Caco-2 (cell line): ENCODE measurements at regions of chr12 and their contacts with region 1.

Region 1: DNA sequence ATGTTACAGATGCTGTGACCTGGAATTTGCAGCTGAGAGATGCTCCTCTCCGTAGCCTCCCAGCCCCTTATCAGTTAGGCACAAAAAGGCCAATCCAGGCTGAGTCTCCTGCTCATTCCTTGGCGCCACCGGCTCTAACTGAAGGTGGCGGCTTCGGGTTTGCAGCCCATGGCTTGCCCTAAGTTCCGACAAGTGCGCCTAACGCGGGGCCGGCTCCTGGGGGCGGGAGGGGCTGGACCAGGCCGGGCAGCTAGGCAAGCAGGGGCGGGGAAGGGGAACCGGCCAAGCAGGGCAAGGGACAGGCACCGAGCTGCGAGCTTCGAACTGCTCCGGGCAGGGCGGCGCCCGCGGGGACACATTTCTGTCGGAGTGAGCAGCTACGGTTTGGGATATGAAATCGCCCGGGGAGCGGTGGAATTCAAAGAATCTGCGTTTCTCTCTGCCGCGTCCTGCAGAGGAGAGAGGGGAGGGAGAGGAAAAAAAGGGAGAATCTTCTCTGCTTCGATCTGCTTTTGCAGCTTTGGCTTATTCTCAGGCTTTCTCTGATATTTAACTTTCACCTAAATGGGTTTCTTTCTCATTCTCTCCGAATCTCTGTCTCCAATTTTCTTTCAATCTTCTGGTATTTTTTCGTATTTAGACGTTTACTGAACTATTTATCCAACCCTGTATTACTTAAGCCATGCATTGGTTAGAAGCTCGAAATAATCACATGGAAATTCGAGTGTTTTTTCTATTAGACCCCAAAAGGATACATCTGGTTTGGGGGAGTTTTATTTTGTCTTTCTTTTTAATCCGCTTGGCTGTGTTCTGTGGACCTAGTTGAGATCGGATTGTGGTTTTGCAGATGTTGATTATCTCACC is 1.6 kb upstream of the HOXC12 start:
- DNase-seq: peak; percentile 87 to 88
- H3K4me3 ChIP-seq: peak overlapping the region; percentile 5; the same call in 1 of the 2 replicates
- H3K4me3 Mint-ChIP-seq: peak overlapping the region; percentile 71
- H3K27ac Mint-ChIP-seq: peak overlapping the region; percentile 76
- H3K4me1 ChIP-seq: peaks cover 31% of the 10 kb centered on the region
- H3K4me1 Mint-ChIP-seq: peaks cover 21% of the 10 kb centered on the region
- H3K27me3 ChIP-seq: no peaks in the 10 kb centered on the region
- H3K27me3 Mint-ChIP-seq: no peaks in the 10 kb centered on the region
- CTCF ChIP-seq: no peak

Region 2: DNA sequence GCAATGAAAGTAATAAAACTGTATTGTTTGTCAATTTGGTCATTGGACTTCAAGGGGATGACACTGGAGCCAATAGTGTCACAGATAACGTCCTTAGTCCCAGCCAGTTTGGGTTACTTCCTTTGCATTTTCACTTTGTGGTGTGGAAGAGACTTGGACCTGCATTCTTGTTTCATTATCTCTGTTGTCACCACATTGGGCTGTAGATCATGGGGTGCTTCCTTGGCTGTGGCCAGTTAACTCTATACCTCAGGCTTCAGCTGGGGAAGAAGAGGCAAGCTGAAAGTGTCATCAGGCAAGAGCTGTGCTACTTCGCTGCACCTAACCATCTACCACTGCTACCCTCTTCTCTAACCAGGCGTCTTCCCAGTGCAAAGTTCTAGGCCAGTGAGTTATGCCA is 186.2 kb before region 1 on chr12:
- CTCF ChIA-PET with region 1: no interaction called
- POLR2A ChIA-PET with region 1: no interaction called
- intact Hi-C with region 1: loop called (anchors 1 kb)
- DNase-seq: no peak
- H3K4me3 ChIP-seq: no peak overlapping the region
- H3K4me3 Mint-ChIP-seq: no peak overlapping the region
- H3K27ac Mint-ChIP-seq: no peak overlapping the region
- H3K4me1 ChIP-seq: no peaks in the 10 kb centered on the region
- H3K4me1 Mint-ChIP-seq: no peaks in the 10 kb centered on the region
- H3K27me3 ChIP-seq: peaks cover 1% of the 10 kb centered on the region
- H3K27me3 Mint-ChIP-seq: peaks cover 21% of the 10 kb centered on the region
- CTCF ChIP-seq: no peak

Region 3: GRCh38 chr12:53806721-53807120 is 146.4 kb before region 1 on chr12:
- CTCF ChIA-PET with region 1: no interaction called
- POLR2A ChIA-PET with region 1: no interaction called
- intact Hi-C with region 1: loop called (anchors 5 kb)
- DNase-seq: no peak
- H3K4me3 ChIP-seq: no peak overlapping the region
- H3K4me3 Mint-ChIP-seq: no peak overlapping the region
- H3K27ac Mint-ChIP-seq: no peak overlapping the region
- H3K4me1 ChIP-seq: peaks cover 12% of the 10 kb centered on the region
- H3K4me1 Mint-ChIP-seq: peaks cover 20% of the 10 kb centered on the region
- H3K27me3 ChIP-seq: no peaks in the 10 kb centered on the region
- H3K27me3 Mint-ChIP-seq: no peaks in the 10 kb centered on the region
- CTCF ChIP-seq: no peak

Region 4: DNA sequence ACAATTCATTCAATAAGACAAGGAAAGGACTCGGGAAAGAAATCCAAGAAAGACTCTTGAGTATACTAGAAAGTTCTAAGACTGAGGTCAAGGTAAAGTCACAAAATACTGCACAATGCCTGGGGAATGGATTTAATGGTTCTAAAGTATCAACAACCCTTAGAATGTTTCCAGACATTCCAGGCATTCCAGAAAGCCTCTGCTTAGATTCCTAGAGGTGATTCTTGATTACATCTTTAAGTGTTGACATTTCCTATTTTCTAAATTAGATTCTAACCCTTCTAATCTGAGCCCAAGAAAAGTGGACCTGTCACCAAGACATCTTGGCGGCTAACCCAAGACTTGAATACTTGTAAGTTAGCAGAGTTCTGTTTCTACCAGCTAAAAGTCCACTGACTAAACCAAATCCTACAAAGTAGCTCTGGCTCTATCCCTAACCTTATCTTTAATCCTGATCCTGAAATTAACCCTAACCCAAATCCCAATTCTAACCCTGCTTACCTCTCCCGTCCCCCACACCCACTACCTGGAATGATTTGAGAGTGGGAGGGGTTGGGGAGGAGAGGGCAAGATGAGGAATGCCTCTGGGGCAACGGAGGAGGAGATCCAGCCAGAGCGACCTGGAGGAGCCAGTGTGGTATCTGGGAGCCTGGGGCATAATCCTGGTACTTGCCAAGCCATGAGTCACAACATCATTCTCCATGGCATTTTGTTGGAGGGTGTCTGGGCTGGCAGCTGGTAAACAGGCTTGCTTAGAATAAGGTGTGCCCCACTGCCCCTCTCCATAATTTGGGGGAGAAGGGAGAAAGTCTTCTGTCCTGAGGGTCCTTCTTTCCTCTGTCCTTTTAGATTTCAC is 107.9 kb before region 1 on chr12:
- CTCF ChIA-PET with region 1: no interaction called
- POLR2A ChIA-PET with region 1: no interaction called
- intact Hi-C with region 1: no loop called
- DNase-seq: peak; percentile 7 to 67
- H3K4me3 ChIP-seq: no peak overlapping the region
- H3K4me3 Mint-ChIP-seq: no peak overlapping the region
- H3K27ac Mint-ChIP-seq: no peak overlapping the region
- H3K4me1 ChIP-seq: peaks cover 19% of the 10 kb centered on the region
- H3K4me1 Mint-ChIP-seq: peaks cover 7% of the 10 kb centered on the region
- H3K27me3 ChIP-seq: no peaks in the 10 kb centered on the region
- H3K27me3 Mint-ChIP-seq: peaks cover 3% of the 10 kb centered on the region
- CTCF ChIP-seq: no peak

Region 5: DNA sequence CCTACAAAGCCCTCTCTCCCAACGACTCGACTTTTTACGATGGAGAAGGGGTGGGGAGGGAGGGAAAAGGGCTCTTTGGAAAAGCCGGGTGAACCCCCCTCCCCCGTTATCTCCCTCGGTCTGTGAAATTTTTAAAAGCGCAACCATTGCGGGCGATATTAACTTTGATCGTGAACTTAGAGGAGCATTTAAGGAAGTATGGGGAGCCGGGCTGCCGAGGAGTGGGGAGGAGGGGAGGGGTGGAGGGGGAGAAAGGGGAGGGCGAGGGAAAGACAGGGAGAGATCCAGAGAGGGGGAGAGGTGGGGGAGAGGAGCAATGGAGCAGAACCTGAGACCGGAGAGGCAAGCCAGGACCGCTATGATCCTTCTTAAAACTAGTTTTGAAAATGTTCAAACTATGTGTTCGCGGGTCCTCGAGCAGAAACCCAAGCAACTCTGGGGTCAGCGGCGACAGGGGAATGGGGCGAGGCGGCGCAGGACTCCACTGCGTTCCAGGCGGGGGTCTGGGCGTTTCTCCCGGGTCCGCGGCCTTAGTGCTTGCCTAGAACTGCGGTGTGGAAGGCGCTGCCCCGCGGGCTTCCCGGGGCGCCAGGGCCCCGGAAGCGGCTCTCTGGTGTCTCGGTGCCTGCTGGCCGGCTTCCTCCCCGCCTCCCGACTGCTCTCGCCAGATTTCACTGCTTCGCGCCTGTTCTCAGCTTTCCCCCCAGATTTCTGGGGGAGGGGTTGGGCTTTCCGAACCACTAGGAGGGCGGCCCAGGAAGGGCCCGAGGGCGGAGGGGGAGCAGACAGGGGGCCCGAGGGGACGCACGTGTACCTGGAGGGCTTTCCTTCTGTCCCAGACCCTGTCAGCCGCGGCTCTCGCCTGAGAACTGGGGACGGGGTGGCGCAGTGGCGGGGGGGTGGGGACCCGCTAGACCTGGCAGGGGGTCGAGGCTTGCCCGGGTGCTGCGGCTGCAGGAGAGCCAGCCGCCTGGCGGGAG is 21.3 kb after region 1 on chr12 and contains the start of gene HOTAIR:
- CTCF ChIA-PET with region 1: interaction called, 8 read pairs
- POLR2A ChIA-PET with region 1: interaction called, 10 read pairs
- intact Hi-C with region 1: loop called (anchors 2 kb)
- DNase-seq: peak in 1 of 2 experiments; percentile 59
- H3K4me3 ChIP-seq: peak within 1 kb of the TSS; percentile 66
- H3K4me3 Mint-ChIP-seq: peak within 1 kb of the TSS; percentile 83
- H3K27ac Mint-ChIP-seq: peak within 1 kb of the TSS; percentile 73
- H3K4me1 ChIP-seq: peaks cover 20% of the 10 kb centered on the region
- H3K4me1 Mint-ChIP-seq: peaks cover 8% of the 10 kb centered on the region
- H3K27me3 ChIP-seq: no peaks in the 10 kb centered on the region
- H3K27me3 Mint-ChIP-seq: no peaks in the 10 kb centered on the region
- CTCF ChIP-seq: no peak
- total RNA-seq, gene HOTAIR: 1.6 and 1.9 TPM in 2 replicates

Region 6: DNA sequence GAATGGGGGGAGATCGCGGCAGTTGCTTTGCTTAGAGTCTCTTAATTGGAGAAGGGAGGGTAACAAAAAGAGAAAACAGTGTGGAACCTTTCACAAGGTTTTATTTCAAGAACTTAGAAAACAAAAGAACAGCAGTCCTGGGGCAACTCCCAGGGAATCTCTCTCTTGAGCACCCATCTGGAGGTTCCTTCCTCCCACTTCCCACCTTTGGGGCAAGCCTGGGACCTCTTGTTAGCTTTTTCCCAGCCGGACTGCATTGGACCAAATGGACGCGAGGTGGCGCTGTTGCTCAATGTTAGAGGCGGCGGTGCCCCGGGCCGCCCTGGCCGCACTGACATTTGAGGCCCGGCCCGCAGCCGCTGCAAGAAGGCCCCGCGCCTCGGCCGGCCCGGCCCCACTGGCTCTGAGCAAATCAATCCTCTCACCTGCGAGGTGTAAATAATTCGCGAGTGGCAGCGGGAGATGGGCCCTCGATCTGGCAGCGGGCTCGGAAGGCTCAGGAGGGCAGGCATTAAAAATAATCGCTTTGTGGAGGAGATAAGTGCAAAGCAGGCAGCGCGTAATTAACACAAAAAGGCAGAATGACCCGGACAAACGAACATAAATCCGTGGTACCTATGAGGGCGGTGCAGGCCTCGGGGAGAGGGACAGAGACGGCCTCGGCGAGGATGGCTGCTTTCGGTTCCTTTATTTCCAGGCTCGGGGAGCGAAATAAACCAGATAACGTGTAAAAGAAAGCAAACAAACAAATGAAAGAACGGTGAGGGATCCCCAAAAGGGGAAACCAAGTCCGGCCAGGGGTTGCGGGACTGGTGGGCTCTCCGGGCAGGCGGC is 53.0 kb after region 1 on chr12:
- CTCF ChIA-PET with region 1: no interaction called
- POLR2A ChIA-PET with region 1: no interaction called
- intact Hi-C with region 1: no loop called
- DNase-seq: peak; percentile 82 to 92
- H3K4me3 ChIP-seq: peak overlapping the region; percentile 53
- H3K4me3 Mint-ChIP-seq: peak overlapping the region; percentile 87
- H3K27ac Mint-ChIP-seq: peak overlapping the region; percentile 58
- H3K4me1 ChIP-seq: peaks cover 41% of the 10 kb centered on the region
- H3K4me1 Mint-ChIP-seq: peaks cover 10% of the 10 kb centered on the region
- H3K27me3 ChIP-seq: no peaks in the 10 kb centered on the region
- H3K27me3 Mint-ChIP-seq: no peaks in the 10 kb centered on the region
- CTCF ChIP-seq: peak; percentile 85 to 90

Region 7: GRCh38 chr12:54142114-54142475 is 189.0 kb after region 1 on chr12:
- CTCF ChIA-PET with region 1: no interaction called
- POLR2A ChIA-PET with region 1: no interaction called
- intact Hi-C with region 1: no loop called
- DNase-seq: no peak
- H3K4me3 ChIP-seq: no peak overlapping the region
- H3K4me3 Mint-ChIP-seq: peak overlapping the region; percentile 58
- H3K27ac Mint-ChIP-seq: no peak overlapping the region
- H3K4me1 ChIP-seq: peaks cover 39% of the 10 kb centered on the region
- H3K4me1 Mint-ChIP-seq: peaks cover 30% of the 10 kb centered on the region
- H3K27me3 ChIP-seq: no peaks in the 10 kb centered on the region
- H3K27me3 Mint-ChIP-seq: no peaks in the 10 kb centered on the region
- CTCF ChIP-seq: no peak